Activated CD4-positive, alpha-beta T cell treated with anti-CD3 and anti-CD28 coated beads for 36 hours (primary cell): ENCODE measurements at regions of chr15 and their contacts with region 1.

Region 1: GRCh38 chr15:57541805-57542504 is 49.7 kb upstream of the MYZAP start:
- DNase-seq: peak; percentile 64
- ATAC-seq: no peak
- H3K4me3 Mint-ChIP-seq: no peak overlapping the region
- H3K27ac Mint-ChIP-seq: no peak overlapping the region
- H3K4me1 Mint-ChIP-seq: peaks cover 2% of the 10 kb centered on the region
- H3K27me3 Mint-ChIP-seq: peaks cover 2% of the 10 kb centered on the region

Region 2: DNA sequence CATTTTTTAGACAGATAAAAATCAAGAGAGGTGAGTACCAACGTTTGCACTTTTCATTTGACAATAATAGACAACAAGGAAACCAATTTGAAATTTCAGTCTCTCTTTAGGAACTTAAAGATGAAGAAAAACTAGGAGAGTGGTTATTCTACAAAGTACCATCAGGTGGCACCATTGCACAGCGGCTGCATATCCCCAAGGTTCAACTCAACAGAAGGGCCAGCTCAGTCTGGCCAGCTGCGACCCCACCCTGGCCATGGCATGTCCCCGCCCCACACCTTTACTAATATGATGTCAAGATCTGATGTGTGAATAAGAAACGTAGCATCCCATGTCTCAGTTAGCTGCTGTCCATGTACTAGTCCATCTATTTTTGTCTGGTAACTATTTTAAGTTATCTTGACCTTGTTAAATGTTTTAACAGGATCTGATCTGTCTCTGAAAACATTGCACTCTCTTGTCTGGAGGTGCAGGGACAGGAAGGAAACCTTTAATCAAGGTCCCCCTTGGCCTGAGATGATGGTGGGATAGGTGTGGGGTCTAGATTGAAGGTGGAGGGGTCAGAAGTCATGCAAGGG is 201.2 kb before region 1 on chr15:
- CTCF ChIA-PET with region 1: interaction called, 22 read pairs
- POLR2A ChIA-PET with region 1: no interaction called
- intact Hi-C with region 1: loop called (anchors 1 kb)
- DNase-seq: peak; percentile 64
- ATAC-seq: peak; percentile 55
- H3K4me3 Mint-ChIP-seq: no peak overlapping the region
- H3K27ac Mint-ChIP-seq: no peak overlapping the region
- H3K4me1 Mint-ChIP-seq: no peaks in the 10 kb centered on the region
- H3K27me3 Mint-ChIP-seq: no peaks in the 10 kb centered on the region